ENCODE measurements at regions of chr16 and their contacts with region 1.

Region 1: GRCh38 chr16:84952335-84953189 is 58.8 kb downstream of the ZDHHC7 start:
- DNase-seq: peak; percentile 54 to 86
- H3K4me3 ChIP-seq: no peak overlapping the region
- H3K27ac ChIP-seq: no peak overlapping the region
- H3K4me1 ChIP-seq: no peaks in the 10 kb centered on the region
- H3K27me3 ChIP-seq: peaks cover 0 to 2% (median 0%) of the 10 kb centered on the region in 4 experiments; a peak in 1 of 7 replicates
- CTCF ChIP-seq: peak; percentile 79 to 94 (median 89)
- EP300 ChIP-seq: no peak
- POLR2A ChIP-seq: no peak
- RAD21 ChIP-seq: peak; percentile 78 to 84

Region 2: GRCh38 chr16:84754353-84754856 is 198.2 kb before region 1 on chr16:
- CTCF ChIA-PET with region 1: interaction called, 75 read pairs
- POLR2A ChIA-PET with region 1: interaction called, 6 read pairs
- DNase-seq: peak; percentile 33 to 76
- H3K4me3 ChIP-seq: no peak overlapping the region
- H3K27ac ChIP-seq: no peak overlapping the region
- H3K4me1 ChIP-seq: no peaks in the 10 kb centered on the region
- H3K27me3 ChIP-seq: no peaks in the 10 kb centered on the region
- CTCF ChIP-seq: peak in 2 of 3 experiments; percentile 73 to 79; a peak in 3 of 4 replicates
- EP300 ChIP-seq: no peak
- POLR2A ChIP-seq: no peak
- RAD21 ChIP-seq: peak; percentile 79 to 82

Region 3: DNA sequence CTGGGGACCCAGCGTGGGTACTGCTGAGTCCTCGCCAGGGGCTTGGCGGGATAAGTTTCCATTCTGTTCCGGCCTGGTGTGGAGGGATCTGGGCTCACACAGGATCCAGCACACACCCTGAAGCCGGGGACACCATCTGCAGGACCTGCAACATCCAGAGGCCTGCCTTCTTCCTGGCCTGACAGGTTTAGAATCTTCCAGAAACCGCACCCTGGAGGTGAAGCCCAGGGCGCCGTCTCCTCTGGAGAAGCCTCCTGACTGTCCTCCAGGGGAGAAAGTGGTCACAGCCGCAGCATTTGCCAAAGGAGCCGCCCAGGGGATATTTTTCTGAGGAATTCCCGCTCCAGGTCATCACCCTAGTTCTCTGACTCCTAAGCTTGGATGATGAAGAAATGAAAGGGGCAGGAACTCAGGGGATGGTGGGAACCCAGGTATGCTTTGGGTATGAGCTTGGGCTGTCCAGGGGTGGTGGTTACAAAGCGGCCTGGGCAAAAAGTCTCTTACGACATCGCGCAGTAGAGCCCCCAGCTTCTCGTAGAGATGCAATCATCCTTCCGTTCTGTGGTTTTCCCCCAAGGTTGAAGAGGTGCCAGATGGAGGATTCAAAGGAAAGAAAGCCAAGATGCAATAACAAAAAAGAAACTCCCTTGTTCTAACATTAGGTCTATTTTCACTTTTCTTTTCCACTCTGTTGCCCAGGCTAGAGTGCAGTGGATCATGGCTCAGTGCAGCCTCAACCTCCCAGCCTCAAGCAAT is 141.9 kb before region 1 on chr16:
- CTCF ChIA-PET with region 1: interaction called, 10 read pairs
- POLR2A ChIA-PET with region 1: no interaction called
- DNase-seq: no peak
- H3K4me3 ChIP-seq: no peak overlapping the region
- H3K27ac ChIP-seq: no peak overlapping the region
- H3K4me1 ChIP-seq: no peaks in the 10 kb centered on the region
- H3K27me3 ChIP-seq: peaks cover 0 to 4% (median 0%) of the 10 kb centered on the region in 4 experiments; a peak in 2 of 7 replicates
- CTCF ChIP-seq: no peak
- EP300 ChIP-seq: no peak
- POLR2A ChIP-seq: no peak
- RAD21 ChIP-seq: no peak

Region 4: GRCh38 chr16:84881702-84882521 is 70.7 kb before region 1 on chr16:
- CTCF ChIA-PET with region 1: interaction called, 10 read pairs
- POLR2A ChIA-PET with region 1: no interaction called
- DNase-seq: no peak
- H3K4me3 ChIP-seq: no peak overlapping the region
- H3K27ac ChIP-seq: no peak overlapping the region
- H3K4me1 ChIP-seq: peaks cover 7 to 20% (median 13%) of the 10 kb centered on the region in 4 experiments
- H3K27me3 ChIP-seq: no peaks in the 10 kb centered on the region
- CTCF ChIP-seq: no peak
- EP300 ChIP-seq: no peak
- POLR2A ChIP-seq: no peak
- RAD21 ChIP-seq: no peak

Region 5: DNA sequence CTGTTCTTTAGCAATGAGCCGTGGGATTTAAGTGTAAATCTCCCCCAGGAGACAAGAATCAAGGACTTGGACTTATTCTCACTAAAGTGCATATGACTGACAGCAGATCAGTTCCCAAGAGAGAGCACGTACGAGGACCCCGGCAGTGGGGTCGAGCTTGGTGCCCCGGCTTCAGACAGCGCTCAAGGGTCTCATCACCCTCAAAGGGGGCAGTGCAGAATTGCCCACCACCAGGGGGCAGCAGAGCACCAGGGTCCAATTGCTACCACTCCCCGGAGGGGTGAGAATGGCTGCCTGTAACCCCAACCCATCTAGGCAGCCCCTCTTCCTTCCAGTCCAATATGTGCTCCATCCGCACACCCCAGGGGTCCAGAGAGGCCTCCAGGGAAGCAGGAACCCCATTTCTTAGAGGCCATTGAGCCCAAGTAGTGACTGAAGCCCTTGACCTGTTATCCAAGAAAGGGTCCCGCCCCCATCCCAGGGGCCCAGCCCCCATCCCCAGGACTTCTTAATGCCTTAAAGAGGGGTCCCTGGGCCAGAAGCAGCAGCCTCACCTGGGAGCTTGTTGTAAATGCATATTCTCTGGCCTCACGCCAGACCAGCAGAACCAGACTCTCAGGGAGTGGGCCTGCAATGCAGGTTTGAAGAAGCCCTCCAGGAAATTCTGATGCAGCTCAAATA is 27.3 kb before region 1 on chr16:
- CTCF ChIA-PET with region 1: interaction called, 123 read pairs
- POLR2A ChIA-PET with region 1: interaction called, 4 read pairs
- DNase-seq: peak; percentile 29 to 95
- H3K4me3 ChIP-seq: no peak overlapping the region
- H3K27ac ChIP-seq: no peak overlapping the region
- H3K4me1 ChIP-seq: peaks cover 0 to 2% (median 0%) of the 10 kb centered on the region in 4 experiments; a peak in 1 of 7 replicates
- H3K27me3 ChIP-seq: no peaks in the 10 kb centered on the region
- CTCF ChIP-seq: peak; percentile 91 to 92 (median 92)
- EP300 ChIP-seq: no peak
- POLR2A ChIP-seq: no peak
- RAD21 ChIP-seq: peak; percentile 88 to 89

Region 6: GRCh38 chr16:84940670-84941551 is 11.7 kb before region 1 on chr16:
- CTCF ChIA-PET with region 1: interaction called, 61 read pairs
- POLR2A ChIA-PET with region 1: no interaction called
- DNase-seq: no peak
- H3K4me3 ChIP-seq: no peak overlapping the region
- H3K27ac ChIP-seq: no peak overlapping the region
- H3K4me1 ChIP-seq: peaks cover 0 to 3% (median 0%) of the 10 kb centered on the region in 4 experiments; a peak in 1 of 7 replicates
- H3K27me3 ChIP-seq: no peaks in the 10 kb centered on the region
- CTCF ChIP-seq: no peak
- EP300 ChIP-seq: no peak
- POLR2A ChIP-seq: no peak
- RAD21 ChIP-seq: no peak

Measured in H1 (cell line).